AG04450 (cell line): ENCODE measurements at regions of chr1 and their contacts with region 1.

Region 1: GRCh38 chr1:147599362-147600118 is 58.2 kb downstream of the BCL9 start:
- DNase-seq: peak; percentile 91
- H3K4me3 ChIP-seq: peak overlapping the region; percentile 79
- H3K27ac ChIP-seq: peak overlapping the region; percentile 54
- H3K27me3 ChIP-seq: no peaks in the 10 kb centered on the region
- CTCF ChIP-seq: no peak

Region 2: DNA sequence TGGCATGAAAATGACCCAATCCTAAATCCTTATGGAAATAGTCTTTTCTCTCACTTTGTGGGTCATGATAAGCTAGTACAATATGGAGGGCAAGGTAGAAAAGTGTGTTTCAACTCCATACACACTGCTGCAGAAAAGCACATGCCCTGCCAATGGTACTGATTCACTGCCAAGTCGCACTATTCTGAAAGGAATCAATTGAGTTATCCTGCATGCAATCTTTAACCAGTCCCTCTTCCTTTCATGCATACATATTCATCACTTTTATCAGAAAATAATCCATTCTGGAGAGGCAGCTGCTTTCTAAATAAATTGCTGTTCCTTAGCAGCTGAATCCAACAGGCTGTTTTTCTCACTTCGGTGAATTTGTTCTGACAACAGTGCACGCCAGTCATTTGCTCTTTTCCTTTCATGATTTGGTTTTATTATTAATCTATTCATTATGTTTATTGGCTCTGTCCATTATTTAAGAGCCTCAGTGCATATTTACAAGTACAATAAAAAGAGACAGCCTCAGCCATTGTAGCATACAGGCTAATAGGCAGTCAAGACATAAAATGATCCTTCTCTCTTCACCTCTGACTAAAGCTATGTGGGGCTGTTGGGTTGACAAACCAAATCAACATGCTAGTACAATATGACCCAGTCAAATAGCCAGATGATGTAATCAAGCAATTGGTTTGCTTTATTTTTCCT is 248.3 kb before region 1 on chr1:
- CTCF ChIA-PET with region 1: no interaction called
- POLR2A ChIA-PET with region 1: no interaction called
- DNase-seq: no peak
- H3K4me3 ChIP-seq: no peak overlapping the region
- H3K27ac ChIP-seq: no peak overlapping the region
- H3K27me3 ChIP-seq: no peaks in the 10 kb centered on the region
- CTCF ChIP-seq: no peak

Region 3: DNA sequence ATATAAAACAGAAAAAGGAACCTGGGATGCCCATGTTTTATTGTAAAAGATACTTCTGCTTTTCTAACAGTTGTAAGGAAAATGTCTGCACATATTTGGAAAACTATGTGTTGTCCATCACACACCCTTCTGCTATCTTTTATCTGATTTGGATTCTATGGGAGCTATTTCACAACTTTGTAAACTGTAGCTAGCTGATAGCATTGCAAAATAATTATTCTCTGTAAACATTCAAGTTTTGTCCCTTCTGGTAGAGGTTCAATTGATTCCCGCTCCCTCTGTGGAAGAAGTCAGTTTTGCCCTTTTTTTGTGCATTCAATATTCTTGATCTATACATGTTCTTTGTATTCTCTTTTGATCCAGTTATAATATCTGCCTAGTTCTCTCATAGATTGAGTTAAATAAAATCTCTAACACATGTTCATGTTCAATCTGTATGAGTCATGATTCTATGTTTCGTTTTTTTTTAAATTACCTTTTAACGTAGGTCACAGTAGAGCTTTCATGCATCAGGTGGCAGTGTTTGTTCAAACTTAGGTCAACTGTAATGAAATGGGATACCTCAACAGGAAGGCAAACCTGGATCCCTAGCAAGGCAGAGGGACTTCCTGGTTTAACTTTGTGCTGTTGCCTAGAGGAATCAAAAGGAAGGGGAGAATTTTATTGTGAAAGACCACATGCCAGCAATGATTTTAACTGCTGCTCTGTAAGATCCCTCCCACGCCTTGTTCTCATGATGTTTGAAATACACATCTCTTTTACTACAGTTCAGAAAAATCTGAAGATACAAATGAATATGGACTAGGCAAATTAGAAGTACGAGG is 84.3 kb before region 1 on chr1:
- CTCF ChIA-PET with region 1: no interaction called
- POLR2A ChIA-PET with region 1: interaction called, 10 read pairs
- DNase-seq: no peak
- H3K4me3 ChIP-seq: no peak overlapping the region
- H3K27ac ChIP-seq: no peak overlapping the region
- H3K27me3 ChIP-seq: no peaks in the 10 kb centered on the region
- CTCF ChIP-seq: no peak

Region 4: DNA sequence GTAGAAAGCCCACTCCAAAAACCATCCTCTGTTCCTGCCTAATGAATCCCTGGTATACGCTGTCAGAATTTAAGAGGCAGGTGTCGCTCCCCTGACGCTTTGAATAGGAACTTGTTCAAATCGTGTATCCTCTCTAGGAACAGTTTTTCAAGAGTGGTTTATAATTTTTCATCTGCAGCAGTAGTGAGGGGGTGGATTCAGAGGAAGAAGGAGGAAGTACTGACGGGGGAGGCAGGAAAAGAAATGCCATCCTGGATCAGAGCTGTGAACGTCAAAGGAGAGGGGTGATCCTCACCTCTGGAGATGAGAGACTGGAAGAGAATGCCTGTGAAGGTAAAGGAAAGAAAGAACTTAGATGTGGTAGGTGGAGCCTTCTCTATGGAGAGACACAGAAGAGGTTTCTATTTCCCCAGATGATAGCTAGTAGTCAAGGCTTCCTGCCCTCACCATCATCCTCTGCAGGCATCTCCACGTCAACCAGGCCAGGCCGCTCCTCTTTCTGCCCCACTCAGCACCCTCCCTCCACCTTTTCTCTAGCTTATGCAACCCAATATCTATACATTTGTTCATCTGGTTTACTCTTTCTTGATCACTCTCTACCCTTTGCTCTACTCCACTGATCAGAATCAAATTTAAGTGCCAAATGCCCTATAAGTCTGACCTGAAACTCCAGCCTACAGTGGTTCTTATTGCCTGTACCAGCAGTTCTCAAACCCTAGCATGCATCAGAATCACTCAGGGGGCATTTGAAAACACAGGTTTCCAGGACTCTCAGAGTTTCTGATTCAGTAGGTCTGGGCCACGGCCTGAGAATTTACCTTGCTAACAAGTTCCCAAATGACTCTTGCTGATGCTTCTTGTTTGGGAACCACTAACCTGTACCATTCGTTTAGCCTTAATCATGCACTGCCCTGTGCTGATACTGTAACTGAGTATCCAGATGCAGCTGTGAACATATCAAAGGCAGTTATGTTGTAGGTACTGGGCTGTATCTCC is 71.3 kb before region 1 on chr1:
- CTCF ChIA-PET with region 1: no interaction called
- POLR2A ChIA-PET with region 1: no interaction called
- DNase-seq: no peak
- H3K4me3 ChIP-seq: no peak overlapping the region
- H3K27ac ChIP-seq: no peak overlapping the region
- H3K27me3 ChIP-seq: peaks cover 18% of the 10 kb centered on the region
- CTCF ChIP-seq: no peak

Region 5: GRCh38 chr1:147541672-147542568 is 57.6 kb before region 1 on chr1:
- CTCF ChIA-PET with region 1: interaction called, 5 read pairs
- POLR2A ChIA-PET with region 1: interaction called, 41 read pairs
- DNase-seq: no peak
- H3K4me3 ChIP-seq: peak overlapping the region; percentile 66
- H3K27ac ChIP-seq: peak overlapping the region; percentile 92
- H3K27me3 ChIP-seq: no peaks in the 10 kb centered on the region
- CTCF ChIP-seq: no peak

Region 6: DNA sequence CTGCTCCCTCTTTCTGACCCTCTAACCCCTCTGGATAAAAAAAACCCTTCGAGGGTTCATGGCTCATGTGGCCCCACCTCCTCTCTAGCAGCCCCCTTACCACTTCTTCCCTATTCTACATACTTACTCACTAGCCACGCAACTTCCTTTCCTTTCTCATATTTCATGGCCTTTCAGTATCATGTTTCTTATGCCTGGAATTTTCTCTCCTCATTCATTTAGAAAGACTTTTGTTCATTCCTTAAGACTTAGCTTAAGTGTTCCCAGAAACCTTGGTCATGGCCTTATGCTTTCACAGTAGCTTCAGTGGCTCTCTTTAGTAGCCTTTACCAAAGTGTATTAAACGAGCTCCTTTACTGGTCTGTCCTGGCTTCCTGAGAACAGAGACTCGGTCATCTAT is 64.7 kb after region 1 on chr1:
- CTCF ChIA-PET with region 1: interaction called, 11 read pairs
- POLR2A ChIA-PET with region 1: no interaction called
- DNase-seq: no peak
- H3K4me3 ChIP-seq: no peak overlapping the region
- H3K27ac ChIP-seq: peak overlapping the region; percentile 11
- H3K27me3 ChIP-seq: no peaks in the 10 kb centered on the region
- CTCF ChIP-seq: no peak